ENCODE measurements at regions of chr7 and their contacts with region 1.

Region 1: GRCh38 chr7:18590744-18591340 is 95.3 kb downstream of the HDAC9 start:
- DNase-seq: no peak
- ATAC-seq: peak; percentile 37
- H3K4me3 Mint-ChIP-seq: no peak overlapping the region
- H3K27ac Mint-ChIP-seq: peak overlapping the region; percentile 78
- H3K4me1 Mint-ChIP-seq: peaks cover 30% of the 10 kb centered on the region
- H3K27me3 Mint-ChIP-seq: no peaks in the 10 kb centered on the region
- CTCF ChIP-seq: no peak

Region 2: GRCh38 chr7:18552943-18553584 is 37.8 kb before region 1 on chr7:
- CTCF ChIA-PET with region 1: interaction called, 13 read pairs
- POLR2A ChIA-PET with region 1: no interaction called
- intact Hi-C with region 1: no loop called
- DNase-seq: no peak
- ATAC-seq: peak; percentile 77
- H3K4me3 Mint-ChIP-seq: peak overlapping the region; percentile 57
- H3K27ac Mint-ChIP-seq: peak overlapping the region; percentile 80
- H3K4me1 Mint-ChIP-seq: peaks cover 61% of the 10 kb centered on the region
- H3K27me3 Mint-ChIP-seq: no peaks in the 10 kb centered on the region
- CTCF ChIP-seq: no peak

Region 3: GRCh38 chr7:19051767-19052375 is 461.0 kb after region 1 on chr7:
- CTCF ChIA-PET with region 1: no interaction called
- POLR2A ChIA-PET with region 1: no interaction called
- intact Hi-C with region 1: loop called (anchors 10 kb)
- DNase-seq: no peak
- ATAC-seq: peak; percentile 66
- H3K4me3 Mint-ChIP-seq: no peak overlapping the region
- H3K27ac Mint-ChIP-seq: no peak overlapping the region
- H3K4me1 Mint-ChIP-seq: no peaks in the 10 kb centered on the region
- H3K27me3 Mint-ChIP-seq: no peaks in the 10 kb centered on the region
- CTCF ChIP-seq: peak; percentile 39

Region 4: DNA sequence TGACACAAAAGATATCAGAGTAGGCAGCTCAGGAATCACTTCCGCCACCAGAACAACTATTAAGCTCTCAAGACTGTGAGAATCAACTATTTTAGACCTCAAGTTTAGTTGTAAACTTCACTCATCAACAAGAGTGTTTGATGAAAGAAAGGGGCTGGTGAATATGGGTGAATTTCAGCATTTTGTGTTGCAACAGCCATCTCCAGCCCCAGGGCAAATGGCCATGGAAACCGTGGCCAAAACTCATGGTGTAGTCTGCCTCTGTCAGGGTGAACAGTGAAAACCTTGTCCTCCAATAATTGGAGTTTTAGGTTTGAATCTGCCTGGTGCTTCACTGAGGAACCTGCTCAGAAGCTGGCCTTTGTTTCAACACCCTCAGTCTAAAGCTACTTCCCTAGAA is 1057.9 kb after region 1 on chr7:
- CTCF ChIA-PET with region 1: no interaction called
- POLR2A ChIA-PET with region 1: no interaction called
- intact Hi-C with region 1: no loop called
- DNase-seq: no peak
- ATAC-seq: no peak
- H3K4me3 Mint-ChIP-seq: no peak overlapping the region
- H3K27ac Mint-ChIP-seq: no peak overlapping the region
- H3K4me1 Mint-ChIP-seq: no peaks in the 10 kb centered on the region
- H3K27me3 Mint-ChIP-seq: peaks cover 14% of the 10 kb centered on the region
- CTCF ChIP-seq: no peak